Activated naive CD4-positive, alpha-beta T cell treated with anti-CD3 and anti-CD28 coated beads for 36 hours (primary cell): ENCODE measurements at regions of chr5 and their contacts with region 1.

Region 1: DNA sequence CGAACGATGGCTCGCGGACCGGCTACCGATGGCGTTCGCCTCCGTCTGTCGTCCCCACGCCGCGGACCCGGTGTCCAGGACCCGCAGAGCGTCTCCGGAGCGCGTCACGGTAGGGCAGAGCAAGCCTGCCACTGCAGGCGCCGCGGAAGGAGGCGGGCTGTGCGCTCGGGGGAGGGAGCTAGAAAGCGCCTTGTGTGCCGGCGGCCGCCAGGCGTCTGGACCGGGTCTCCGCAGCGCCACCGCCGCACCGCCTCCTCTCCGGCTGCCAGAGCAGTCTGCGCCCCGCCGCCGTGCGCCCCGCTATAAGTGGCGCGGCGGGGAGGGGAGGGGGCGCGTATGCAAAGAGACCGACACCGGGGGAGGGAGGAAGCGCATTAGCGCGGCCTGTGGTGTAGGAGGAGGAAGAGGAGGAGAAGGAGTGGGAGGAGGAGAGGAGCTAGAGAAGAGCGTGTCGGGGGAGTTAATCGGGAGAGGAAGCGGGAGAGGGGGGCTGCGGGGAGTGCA is at the start of gene ENC1:
- DNase-seq: peak; percentile 79
- H3K4me3 Mint-ChIP-seq: peak within 1 kb of the TSS; percentile 80
- H3K27ac Mint-ChIP-seq: no peak within 1 kb of the TSS
- H3K4me1 Mint-ChIP-seq: peaks cover 26% of the 10 kb centered on the region
- H3K27me3 Mint-ChIP-seq: peaks cover 22% of the 10 kb centered on the region
- total RNA-seq, gene ENC1: 0.74 to 0.86 TPM

Region 2: GRCh38 chr5:73902327-73903051 is 738.0 kb before region 1 on chr5:
- CTCF ChIA-PET with region 1: interaction called, 20 read pairs
- intact Hi-C with region 1: loop called (anchors 2 kb)
- DNase-seq: peak; percentile 9
- H3K4me3 Mint-ChIP-seq: no peak overlapping the region
- H3K27ac Mint-ChIP-seq: no peak overlapping the region
- H3K4me1 Mint-ChIP-seq: peaks cover 3% of the 10 kb centered on the region
- H3K27me3 Mint-ChIP-seq: peaks cover 23% of the 10 kb centered on the region

Region 3: GRCh38 chr5:74212336-74212735 is 428.2 kb before region 1 on chr5:
- CTCF ChIA-PET with region 1: no interaction called
- intact Hi-C with region 1: loop called (anchors 2 kb)
- DNase-seq: peak; percentile 27
- H3K4me3 Mint-ChIP-seq: no peak overlapping the region
- H3K27ac Mint-ChIP-seq: no peak overlapping the region
- H3K4me1 Mint-ChIP-seq: no peaks in the 10 kb centered on the region
- H3K27me3 Mint-ChIP-seq: peaks cover 6% of the 10 kb centered on the region

Region 4: GRCh38 chr5:74394916-74395781 is 245.4 kb before region 1 on chr5:
- CTCF ChIA-PET with region 1: interaction called, 4 read pairs
- intact Hi-C with region 1: loop called (anchors 1 kb)
- DNase-seq: no peak
- H3K4me3 Mint-ChIP-seq: no peak overlapping the region
- H3K27ac Mint-ChIP-seq: no peak overlapping the region
- H3K4me1 Mint-ChIP-seq: no peaks in the 10 kb centered on the region
- H3K27me3 Mint-ChIP-seq: no peaks in the 10 kb centered on the region

Region 5: GRCh38 chr5:74452856-74453255 is 187.6 kb before region 1 on chr5:
- CTCF ChIA-PET with region 1: no interaction called
- intact Hi-C with region 1: no loop called
- DNase-seq: no peak
- H3K4me3 Mint-ChIP-seq: no peak overlapping the region
- H3K27ac Mint-ChIP-seq: no peak overlapping the region
- H3K4me1 Mint-ChIP-seq: no peaks in the 10 kb centered on the region
- H3K27me3 Mint-ChIP-seq: peaks cover 12% of the 10 kb centered on the region

Region 6: GRCh38 chr5:74576941-74577456 is 63.5 kb before region 1 on chr5:
- CTCF ChIA-PET with region 1: no interaction called
- intact Hi-C with region 1: loop called (anchors 1 kb)
- DNase-seq: peak; percentile 13
- H3K4me3 Mint-ChIP-seq: no peak overlapping the region
- H3K27ac Mint-ChIP-seq: no peak overlapping the region
- H3K4me1 Mint-ChIP-seq: peaks cover 36% of the 10 kb centered on the region
- H3K27me3 Mint-ChIP-seq: peaks cover 1% of the 10 kb centered on the region